ENCODE measurements at regions of chr15 and their contacts with region 1.

Region 1: GRCh38 chr15:57561041-57561711 is 30.5 kb upstream of the MYZAP start:
- DNase-seq: peak; percentile 33 to 76 (median 62)
- ATAC-seq: peak; percentile 86
- H3K4me3 ChIP-seq: no peak overlapping the region
- H3K4me3 Mint-ChIP-seq: peak overlapping the region in 9 of 10 donors; percentile 9 to 56 (median 28)
- H3K27ac ChIP-seq: no peak overlapping the region
- H3K27ac Mint-ChIP-seq: peak overlapping the region in 6 of 9 donors; percentile 10 to 76 (median 53)
- H3K4me1 ChIP-seq: peaks cover 4 to 15% of the 10 kb centered on the region in 2 donors
- H3K4me1 Mint-ChIP-seq: peaks cover 11 to 47% (median 37%) of the 10 kb centered on the region in 7 donors
- H3K27me3 ChIP-seq: no peaks in the 10 kb centered on the region
- H3K27me3 Mint-ChIP-seq: peaks cover 0 to 6% (median 0%) of the 10 kb centered on the region in 5 donors

Region 2: DNA sequence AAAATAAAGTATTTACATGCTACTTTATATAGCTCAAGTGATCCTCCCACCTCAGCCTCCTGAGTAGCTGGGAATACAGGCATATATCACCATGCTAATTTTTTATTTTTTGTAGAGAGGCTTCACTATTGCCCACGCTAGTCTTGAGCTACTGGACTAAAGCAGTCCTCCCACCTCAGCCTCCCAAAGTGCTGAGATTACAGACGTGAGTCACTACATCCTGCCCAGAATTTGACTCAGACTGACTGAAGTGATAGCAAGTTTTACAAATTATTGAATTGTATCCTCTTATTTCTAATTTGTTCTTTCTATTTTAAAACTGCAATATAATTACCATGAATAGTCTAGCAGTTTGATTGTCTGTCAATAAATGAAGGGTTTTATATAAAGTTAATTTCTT is 395.2 kb before region 1 on chr15:
- CTCF ChIA-PET with region 1: no interaction called
- POLR2A ChIA-PET with region 1: no interaction called
- intact Hi-C with region 1: no loop called
- DNase-seq: no peak
- ATAC-seq: no peak
- H3K4me3 ChIP-seq: no peak overlapping the region
- H3K4me3 Mint-ChIP-seq: no peak overlapping the region
- H3K27ac ChIP-seq: no peak overlapping the region
- H3K27ac Mint-ChIP-seq: no peak overlapping the region
- H3K4me1 ChIP-seq: no peaks in the 10 kb centered on the region
- H3K4me1 Mint-ChIP-seq: peaks cover 0 to 5% (median 0%) of the 10 kb centered on the region in 7 donors
- H3K27me3 ChIP-seq: no peaks in the 10 kb centered on the region
- H3K27me3 Mint-ChIP-seq: no peaks in the 10 kb centered on the region

Region 3: DNA sequence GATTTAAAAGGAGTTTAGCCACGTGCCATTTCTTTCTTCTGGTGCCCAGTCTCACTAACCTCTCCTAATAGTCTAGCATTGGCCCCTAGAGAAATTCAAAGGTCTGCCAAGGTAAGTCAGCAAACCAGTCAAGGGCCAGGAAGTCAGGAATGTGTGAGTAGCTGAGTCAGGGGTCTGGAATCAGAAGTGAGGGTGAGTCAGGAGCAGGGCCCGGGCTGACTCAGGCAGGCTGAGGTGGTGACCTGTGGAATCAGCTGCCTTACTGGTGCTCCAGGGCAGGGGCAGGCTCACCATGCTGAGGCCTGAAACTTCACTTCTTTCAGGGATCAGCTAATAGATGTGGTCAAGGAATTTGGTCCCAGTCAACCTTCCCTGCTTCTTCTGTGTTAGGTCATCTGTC is 75.3 kb before region 1 on chr15:
- CTCF ChIA-PET with region 1: no interaction called
- POLR2A ChIA-PET with region 1: no interaction called
- intact Hi-C with region 1: no loop called
- DNase-seq: no peak
- ATAC-seq: no peak
- H3K4me3 ChIP-seq: no peak overlapping the region
- H3K4me3 Mint-ChIP-seq: no peak overlapping the region
- H3K27ac ChIP-seq: no peak overlapping the region
- H3K27ac Mint-ChIP-seq: no peak overlapping the region
- H3K4me1 ChIP-seq: no peaks in the 10 kb centered on the region
- H3K4me1 Mint-ChIP-seq: no peaks in the 10 kb centered on the region
- H3K27me3 ChIP-seq: no peaks in the 10 kb centered on the region
- H3K27me3 Mint-ChIP-seq: peaks cover 24 to 45% (median 36%) of the 10 kb centered on the region in 5 donors

Region 4: DNA sequence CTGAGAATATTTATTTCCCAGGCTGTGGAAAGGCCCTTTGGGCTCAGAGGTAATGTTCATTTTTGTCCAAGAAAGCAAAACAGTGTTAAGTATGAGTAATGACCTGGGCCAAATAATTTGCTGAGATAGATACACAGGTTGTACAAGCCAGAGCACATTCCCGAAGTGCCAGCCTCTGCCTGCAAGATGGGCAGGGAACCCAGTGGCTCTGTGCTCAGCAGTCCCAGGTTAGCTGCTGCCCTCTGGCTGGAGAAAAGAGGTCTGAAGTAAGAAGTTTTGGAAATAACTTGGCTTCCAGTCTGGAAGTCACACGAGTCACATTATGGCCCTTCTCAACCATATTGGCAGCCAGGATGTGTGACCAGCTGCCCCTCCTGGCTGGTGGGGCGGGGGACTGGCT is 50.8 kb after region 1 on chr15:
- CTCF ChIA-PET with region 1: interaction called, 35 read pairs
- POLR2A ChIA-PET with region 1: interaction called, 4 read pairs
- intact Hi-C with region 1: loop called in 1 of 2 experiments (anchors 1 kb)
- DNase-seq: peak in 1 of 9 donors; percentile 22
- ATAC-seq: no peak
- H3K4me3 ChIP-seq: no peak overlapping the region
- H3K4me3 Mint-ChIP-seq: no peak overlapping the region
- H3K27ac ChIP-seq: no peak overlapping the region
- H3K27ac Mint-ChIP-seq: peak overlapping the region in 1 of 9 donors; percentile 62
- H3K4me1 ChIP-seq: no peaks in the 10 kb centered on the region
- H3K4me1 Mint-ChIP-seq: peaks cover 0 to 2% (median 0%) of the 10 kb centered on the region in 7 donors
- H3K27me3 ChIP-seq: no peaks in the 10 kb centered on the region
- H3K27me3 Mint-ChIP-seq: peaks cover 0 to 4% (median 0%) of the 10 kb centered on the region in 5 donors

Region 5: DNA sequence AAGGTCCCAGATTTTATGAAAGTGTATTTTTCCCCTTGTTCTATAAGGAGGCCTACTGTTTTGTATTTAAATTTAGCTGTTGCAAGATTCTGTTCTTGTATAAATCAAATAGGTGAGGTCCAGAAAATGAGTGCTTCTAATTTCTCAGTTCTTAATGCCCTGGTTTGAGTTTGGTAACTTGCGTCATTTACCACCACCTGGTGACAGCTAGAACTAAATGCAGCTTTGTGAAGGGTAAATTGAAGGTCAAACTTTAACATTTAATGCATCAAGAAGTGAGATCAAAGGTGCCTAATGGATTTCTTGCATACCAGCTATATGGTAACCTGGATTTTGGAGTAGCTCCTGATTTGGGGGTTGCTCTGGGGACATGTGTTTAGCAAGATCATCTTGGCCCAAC is 94.6 kb after region 1 on chr15:
- CTCF ChIA-PET with region 1: interaction called, 7 read pairs
- POLR2A ChIA-PET with region 1: no interaction called
- intact Hi-C with region 1: loop called in 1 of 2 experiments (anchors 1 kb)
- DNase-seq: no peak
- ATAC-seq: no peak
- H3K4me3 ChIP-seq: no peak overlapping the region
- H3K4me3 Mint-ChIP-seq: no peak overlapping the region
- H3K27ac ChIP-seq: no peak overlapping the region
- H3K27ac Mint-ChIP-seq: no peak overlapping the region
- H3K4me1 ChIP-seq: no peaks in the 10 kb centered on the region
- H3K4me1 Mint-ChIP-seq: peaks cover 0 to 10% (median 0%) of the 10 kb centered on the region in 7 donors
- H3K27me3 ChIP-seq: no peaks in the 10 kb centered on the region
- H3K27me3 Mint-ChIP-seq: peaks cover 0 to 14% (median 0%) of the 10 kb centered on the region in 5 donors

Region 6: DNA sequence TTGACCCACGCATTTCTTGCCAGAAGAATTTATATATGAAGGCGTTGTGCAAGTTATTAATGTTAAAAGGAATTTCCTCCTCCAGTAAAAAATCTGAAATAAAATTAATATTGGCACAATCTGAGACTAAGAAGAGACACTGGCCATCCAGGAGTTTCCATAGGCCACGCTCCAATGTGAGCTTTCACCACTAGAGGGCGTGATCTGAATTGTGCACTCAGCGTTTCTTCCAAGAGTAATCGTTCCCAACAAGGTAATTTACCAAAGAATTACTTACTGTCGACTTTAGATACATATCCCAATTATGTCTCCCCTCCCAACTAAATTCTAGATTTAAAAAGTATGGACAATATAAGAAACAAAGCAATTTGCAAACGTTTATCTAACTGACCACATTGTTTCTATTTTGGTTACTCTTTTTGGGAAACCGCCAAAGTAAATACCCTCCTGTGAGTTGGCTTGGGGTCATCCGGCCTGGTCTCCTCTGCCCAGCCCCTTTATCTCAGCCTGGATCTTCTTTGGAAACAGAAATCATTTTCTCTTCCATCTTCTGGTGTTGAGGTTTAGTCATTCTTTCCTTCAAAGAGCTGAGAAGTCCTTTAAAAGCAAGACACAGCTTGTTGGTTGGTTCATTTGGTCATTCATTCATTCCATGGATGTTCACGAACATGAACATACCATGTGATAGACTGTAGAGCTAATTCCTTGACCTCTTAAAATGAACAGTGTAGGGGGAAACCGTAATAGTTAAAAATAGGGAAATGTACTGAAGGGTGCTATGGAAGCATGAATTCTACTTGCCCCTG is 171.6 kb after region 1 on chr15:
- CTCF ChIA-PET with region 1: interaction called, 3 read pairs
- POLR2A ChIA-PET with region 1: no interaction called
- intact Hi-C with region 1: loop called (anchors 1 kb)
- DNase-seq: peak in 6 of 9 donors; percentile 16 to 51 (median 34)
- ATAC-seq: peak; percentile 52
- H3K4me3 ChIP-seq: no peak overlapping the region
- H3K4me3 Mint-ChIP-seq: peak overlapping the region in 1 of 10 donors; percentile 24
- H3K27ac ChIP-seq: no peak overlapping the region
- H3K27ac Mint-ChIP-seq: no peak overlapping the region
- H3K4me1 ChIP-seq: no peaks in the 10 kb centered on the region
- H3K4me1 Mint-ChIP-seq: peaks cover 4 to 21% (median 14%) of the 10 kb centered on the region in 7 donors
- H3K27me3 ChIP-seq: no peaks in the 10 kb centered on the region
- H3K27me3 Mint-ChIP-seq: no peaks in the 10 kb centered on the region

Region 7: GRCh38 chr15:58070801-58071418 is 509.7 kb after region 1 on chr15:
- CTCF ChIA-PET with region 1: no interaction called
- POLR2A ChIA-PET with region 1: no interaction called
- intact Hi-C with region 1: loop called (anchors 2 kb)
- DNase-seq: peak in 5 of 9 donors; percentile 10 to 43 (median 22)
- ATAC-seq: no peak
- H3K4me3 ChIP-seq: no peak overlapping the region
- H3K4me3 Mint-ChIP-seq: no peak overlapping the region
- H3K27ac ChIP-seq: no peak overlapping the region
- H3K27ac Mint-ChIP-seq: no peak overlapping the region
- H3K4me1 ChIP-seq: no peaks in the 10 kb centered on the region
- H3K4me1 Mint-ChIP-seq: peaks cover 0 to 8% (median 6%) of the 10 kb centered on the region in 7 donors
- H3K27me3 ChIP-seq: peaks cover 0 to 14% of the 10 kb centered on the region in 2 donors
- H3K27me3 Mint-ChIP-seq: peaks cover 46 to 66% (median 62%) of the 10 kb centered on the region in 5 donors